Left lung (tissue), 14 donors: ENCODE measurements at regions of chr5 and their contacts with region 1.

Region 1: DNA sequence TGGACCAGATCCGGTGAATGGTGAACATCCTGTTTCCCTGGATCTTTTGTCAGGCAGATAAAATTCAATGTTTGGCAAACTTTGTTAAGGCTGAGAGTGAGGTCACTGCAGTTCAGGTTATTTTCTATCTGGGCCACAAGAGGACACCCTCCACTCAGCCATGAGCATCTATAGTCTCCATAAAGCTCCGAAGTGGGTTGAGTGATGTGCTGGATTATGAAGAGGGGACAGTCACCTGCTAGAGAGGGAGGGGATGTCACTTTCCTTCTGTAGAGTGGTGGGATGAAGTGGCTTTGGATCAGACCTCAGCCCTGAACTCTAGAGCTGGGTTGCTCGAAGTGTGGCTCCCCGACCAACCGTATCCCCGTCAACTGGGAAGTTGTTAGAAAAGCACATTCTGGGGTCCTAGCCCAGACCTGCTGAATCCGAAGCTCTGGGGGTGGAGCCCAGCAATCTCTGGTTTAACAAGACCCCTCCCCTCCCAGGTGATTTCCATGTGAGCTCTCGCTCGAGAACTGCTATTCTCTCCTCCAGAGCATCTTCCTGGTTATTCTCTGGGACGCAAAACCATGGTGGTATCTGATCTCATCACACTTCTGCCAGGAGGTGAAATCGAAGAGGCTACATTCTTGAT is 31.8 kb upstream of the FGF1 start:
- DNase-seq: peak in 2 of 4 donors; percentile 36 to 50
- ATAC-seq: peak; percentile 49
- H3K4me3 ChIP-seq: no peak overlapping the region
- H3K27ac ChIP-seq: no peak overlapping the region
- H3K4me1 ChIP-seq: peaks cover 0 to 18% of the 10 kb centered on the region in 2 donors
- H3K27me3 ChIP-seq: peaks cover 0 to 5% of the 10 kb centered on the region in 2 donors
- CTCF ChIP-seq: peak; percentile 39 to 51

Region 2: DNA sequence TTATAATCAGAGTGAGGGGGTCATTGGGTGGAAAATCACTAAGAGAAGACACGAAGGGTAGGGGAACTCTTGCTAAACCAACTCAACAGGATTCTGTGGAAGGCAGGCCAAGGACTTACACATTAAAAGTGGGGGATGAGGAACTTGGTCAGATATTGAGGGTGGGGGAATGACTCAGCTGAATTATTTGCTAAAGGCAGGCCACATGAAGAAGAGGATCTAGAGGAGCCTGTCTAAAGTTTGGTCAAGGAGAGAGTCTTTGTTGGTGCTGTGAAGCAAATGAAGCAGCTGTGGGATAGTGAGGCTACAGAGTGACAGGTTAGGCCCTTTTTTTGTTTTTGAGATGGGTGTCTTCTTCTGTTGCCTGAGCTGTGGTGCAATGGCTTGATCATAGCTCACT is 329.0 kb before region 1 on chr5:
- intact Hi-C with region 1: no loop called
- DNase-seq: no peak
- ATAC-seq: no peak
- H3K4me3 ChIP-seq: no peak overlapping the region
- H3K27ac ChIP-seq: peak overlapping the region in 1 of 2 donors; percentile 48
- H3K4me1 ChIP-seq: peaks cover 13 to 38% of the 10 kb centered on the region in 2 donors
- H3K27me3 ChIP-seq: no peaks in the 10 kb centered on the region
- CTCF ChIP-seq: no peak

Region 3: DNA sequence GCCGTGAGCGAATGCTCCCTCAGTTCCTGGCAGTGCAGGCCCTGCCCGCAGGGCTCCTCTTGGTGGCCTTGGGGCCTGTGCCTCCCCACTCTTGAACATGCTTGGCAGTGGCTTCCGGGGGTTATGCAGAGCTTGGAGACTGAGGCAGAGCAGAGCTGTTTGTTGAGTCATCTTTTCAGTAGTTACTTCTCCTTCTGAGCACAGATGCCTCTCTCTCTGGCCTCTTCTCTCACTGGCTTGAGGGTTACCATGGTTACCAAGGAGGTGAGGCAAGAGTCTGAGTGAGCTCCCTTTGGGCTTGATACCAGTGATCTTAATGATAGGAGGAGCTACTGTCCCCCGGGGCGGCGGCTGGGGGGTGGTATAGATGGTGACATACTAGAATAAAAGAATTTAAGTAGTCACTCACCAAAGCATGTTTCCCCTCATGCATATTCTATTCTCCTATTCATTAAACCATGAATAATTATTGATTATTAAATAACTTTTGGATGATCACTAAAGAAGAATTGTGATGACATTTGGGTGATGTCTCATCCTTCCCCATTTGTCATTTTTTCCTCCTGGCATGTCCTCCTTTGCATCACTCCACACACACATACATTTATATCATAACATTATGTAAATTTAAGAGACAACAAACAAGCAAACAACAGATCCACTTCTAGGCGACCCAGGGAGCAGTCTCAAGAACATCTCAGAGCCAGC is 163.5 kb after region 1 on chr5:
- intact Hi-C with region 1: loop called in 1 of 2 experiments (anchors 2 kb)
- DNase-seq: peak in 1 of 4 donors; percentile 48
- ATAC-seq: peak; percentile 63
- H3K4me3 ChIP-seq: no peak overlapping the region
- H3K27ac ChIP-seq: peak overlapping the region in 1 of 2 donors; percentile 61
- H3K4me1 ChIP-seq: peaks cover 9 to 44% of the 10 kb centered on the region in 2 donors
- H3K27me3 ChIP-seq: no peaks in the 10 kb centered on the region
- CTCF ChIP-seq: no peak